ENCODE measurements at regions of chr5 and their contacts with region 1.

Region 1: GRCh38 chr5:115214541-115214940 is 44.8 kb upstream of the TRIM36 start:
- DNase-seq: no peak
- ATAC-seq: no peak
- H3K4me3 ChIP-seq: no peak overlapping the region
- H3K27ac ChIP-seq: no peak overlapping the region
- H3K4me1 ChIP-seq: no peaks in the 10 kb centered on the region
- H3K27me3 ChIP-seq: no peaks in the 10 kb centered on the region
- CTCF ChIP-seq: no peak

Region 2: GRCh38 chr5:115202952-115203351 is 11.6 kb before region 1 on chr5:
- CTCF ChIA-PET with region 1: no interaction called
- POLR2A ChIA-PET with region 1: interaction called, 13 read pairs
- in situ Hi-C with region 1: no loop called
- intact Hi-C with region 1: no loop called
- DNase-seq: no peak
- ATAC-seq: no peak
- H3K4me3 ChIP-seq: no peak overlapping the region
- H3K27ac ChIP-seq: no peak overlapping the region
- H3K4me1 ChIP-seq: no peaks in the 10 kb centered on the region
- H3K27me3 ChIP-seq: no peaks in the 10 kb centered on the region
- CTCF ChIP-seq: no peak

Region 3: DNA sequence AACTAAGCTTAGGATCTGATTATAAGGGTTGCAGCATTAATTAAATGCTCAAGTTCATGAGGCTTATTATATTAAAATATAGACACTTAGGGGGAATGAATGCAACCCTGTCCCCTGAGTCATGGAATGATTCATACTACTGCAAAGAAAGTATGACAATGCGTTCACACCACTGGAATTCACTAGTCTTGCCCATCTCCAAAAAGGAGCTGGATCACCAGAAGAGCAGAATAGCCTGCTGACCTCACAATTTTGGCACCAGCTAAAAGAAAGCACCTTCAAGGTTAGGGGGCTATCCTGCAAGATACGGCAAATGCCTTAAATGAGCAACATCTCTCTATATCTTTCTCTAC is 443.3 kb after region 1 on chr5:
- CTCF ChIA-PET with region 1: no interaction called
- POLR2A ChIA-PET with region 1: no interaction called
- in situ Hi-C with region 1: no loop called
- intact Hi-C with region 1: no loop called
- DNase-seq: peak; percentile 28
- ATAC-seq: peak; percentile 58; the same call in 1 of the 2 replicates
- H3K4me3 ChIP-seq: no peak overlapping the region
- H3K27ac ChIP-seq: no peak overlapping the region
- H3K4me1 ChIP-seq: no peaks in the 10 kb centered on the region
- H3K27me3 ChIP-seq: peaks cover 2% of the 10 kb centered on the region; the same call in 1 of the 2 replicates
- CTCF ChIP-seq: no peak

Measured in Panc1 (cell line).